ENCODE measurements at regions of chr11 and their contacts with region 1.

Region 1: GRCh38 chr11:31069447-31070205 is 299.9 kb downstream of the DCDC1 start:
- DNase-seq: no peak
- H3K4me3 ChIP-seq: no peak overlapping the region
- H3K4me3 Mint-ChIP-seq: no peak overlapping the region
- H3K27ac ChIP-seq: no peak overlapping the region
- H3K27ac Mint-ChIP-seq: no peak overlapping the region
- H3K4me1 ChIP-seq: no peaks in the 10 kb centered on the region
- H3K4me1 Mint-ChIP-seq: no peaks in the 10 kb centered on the region
- H3K27me3 ChIP-seq: no peaks in the 10 kb centered on the region
- H3K27me3 Mint-ChIP-seq: peaks cover 0 to 2% (median 0%) of the 10 kb centered on the region in 3 donors
- CTCF ChIP-seq: no peak

Region 2: GRCh38 chr11:31019786-31020185 is 49.8 kb before region 1 on chr11:
- intact Hi-C with region 1: loop called in 1 of 2 experiments (anchors 10 kb)
- DNase-seq: no peak
- H3K4me3 ChIP-seq: no peak overlapping the region
- H3K4me3 Mint-ChIP-seq: no peak overlapping the region
- H3K27ac ChIP-seq: no peak overlapping the region
- H3K27ac Mint-ChIP-seq: no peak overlapping the region
- H3K4me1 ChIP-seq: no peaks in the 10 kb centered on the region
- H3K4me1 Mint-ChIP-seq: no peaks in the 10 kb centered on the region
- H3K27me3 ChIP-seq: no peaks in the 10 kb centered on the region
- H3K27me3 Mint-ChIP-seq: no peaks in the 10 kb centered on the region
- CTCF ChIP-seq: no peak

Measured in CD14-positive monocyte (primary cell).